Activated T-helper 1 cell treated with anti-CD3 and anti-CD28 coated beads, Interleukin-12 subunit alpha, Interleukin-12 subunit beta, Interleukin-2, Interleukin-4 antibody, amounts not matched to agents 30 ng/mL and 10 ng/mL and 1 ng/mL, durations not matched to agents 14 hours and 24 hours and 36 hours (primary cell): ENCODE measurements at regions of chr6 and their contacts with region 1.

Region 1: GRCh38 chr6:166999145-166999883 is at the start of gene CEP43:
- DNase-seq: peak; percentile 88
- H3K4me3 Mint-ChIP-seq: peak within 1 kb of the TSS; percentile 90
- H3K27ac Mint-ChIP-seq: peak within 1 kb of the TSS; percentile 80
- H3K4me1 Mint-ChIP-seq: peaks cover 31% of the 10 kb centered on the region
- H3K27me3 Mint-ChIP-seq: no peaks in the 10 kb centered on the region
- total RNA-seq, gene CEP43: 18.8 and 21.4 TPM in 2 replicates

Region 2: GRCh38 chr6:166862287-166862977 is 136.9 kb before region 1 on chr6:
- intact Hi-C with region 1: loop called (anchors 5 kb)
- DNase-seq: peak; percentile 9
- H3K4me3 Mint-ChIP-seq: peak overlapping the region; percentile 80
- H3K27ac Mint-ChIP-seq: no peak overlapping the region
- H3K4me1 Mint-ChIP-seq: peaks cover 7% of the 10 kb centered on the region
- H3K27me3 Mint-ChIP-seq: peaks cover 34% of the 10 kb centered on the region

Region 3: GRCh38 chr6:166956444-166957086 is 42.7 kb before region 1 on chr6 and contains the start of gene RNASET2:
- intact Hi-C with region 1: loop called (anchors 1 kb)
- DNase-seq: peak; percentile 98
- H3K4me3 Mint-ChIP-seq: peak within 1 kb of the TSS; percentile 92
- H3K27ac Mint-ChIP-seq: peak within 1 kb of the TSS; percentile 91
- H3K4me1 Mint-ChIP-seq: peaks cover 74% of the 10 kb centered on the region
- H3K27me3 Mint-ChIP-seq: no peaks in the 10 kb centered on the region
- total RNA-seq, gene RNASET2: 99.5 TPM in 2 replicates

Region 4: DNA sequence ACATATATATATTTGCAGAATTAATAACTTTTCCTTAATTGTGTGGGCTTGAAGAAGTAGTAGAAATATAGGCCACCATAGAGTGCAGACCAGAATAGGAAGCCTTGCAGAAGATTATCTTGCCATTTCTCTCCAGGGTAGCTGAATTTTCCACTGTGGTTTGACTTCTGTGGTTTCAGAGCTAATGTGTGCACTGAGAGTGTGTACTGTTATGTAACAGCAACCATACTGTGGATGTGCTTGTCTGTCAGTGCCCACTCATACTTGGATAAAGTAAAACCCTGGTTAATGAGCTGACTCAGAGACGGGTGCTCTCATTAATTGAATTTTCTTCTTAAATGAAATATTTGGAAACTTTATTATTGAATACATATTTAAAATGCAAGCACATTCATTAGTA is 57.1 kb after region 1 on chr6:
- intact Hi-C with region 1: loop called (anchors 2 kb)
- DNase-seq: no peak
- H3K4me3 Mint-ChIP-seq: no peak overlapping the region
- H3K27ac Mint-ChIP-seq: no peak overlapping the region
- H3K4me1 Mint-ChIP-seq: peaks cover 4% of the 10 kb centered on the region
- H3K27me3 Mint-ChIP-seq: peaks cover 20% of the 10 kb centered on the region

Region 5: GRCh38 chr6:167350731-167351655 is 351.7 kb after region 1 on chr6:
- intact Hi-C with region 1: loop called (anchors 2 kb)
- DNase-seq: peak; percentile 72
- H3K4me3 Mint-ChIP-seq: peak overlapping the region; percentile 84
- H3K27ac Mint-ChIP-seq: peak overlapping the region; percentile 78
- H3K4me1 Mint-ChIP-seq: peaks cover 24% of the 10 kb centered on the region
- H3K27me3 Mint-ChIP-seq: peaks cover 33% of the 10 kb centered on the region